Heart right ventricle (tissue), 16 donors: ENCODE measurements at regions of chr1 and their contacts with region 1.

Region 1: DNA sequence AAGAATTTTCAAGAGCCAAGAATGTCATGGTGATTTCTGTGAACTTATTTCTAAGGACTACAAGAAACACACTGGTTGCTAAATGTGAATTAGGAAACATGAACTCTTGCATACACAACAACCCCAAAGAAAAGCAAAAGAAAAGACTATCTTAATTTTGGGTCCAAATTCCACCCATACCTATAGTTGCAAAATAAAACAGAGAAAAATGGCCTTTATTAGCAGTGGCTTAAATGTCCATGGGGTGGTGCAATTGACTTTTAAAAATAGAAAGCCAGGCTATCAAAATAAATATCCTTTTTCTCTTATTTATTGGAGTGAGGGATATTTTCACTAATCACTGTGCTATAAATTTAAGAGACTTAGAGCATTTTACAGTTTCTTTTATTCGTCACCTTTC is 80.9 kb upstream of the DPYD start:
- DNase-seq: no peak
- ATAC-seq: no peak
- H3K4me3 ChIP-seq: no peak overlapping the region
- H3K27ac ChIP-seq: no peak overlapping the region
- H3K4me1 ChIP-seq: no peaks in the 10 kb centered on the region
- H3K27me3 ChIP-seq: no peaks in the 10 kb centered on the region
- CTCF ChIP-seq: peak in 1 of 9 donors; percentile 11

Region 2: DNA sequence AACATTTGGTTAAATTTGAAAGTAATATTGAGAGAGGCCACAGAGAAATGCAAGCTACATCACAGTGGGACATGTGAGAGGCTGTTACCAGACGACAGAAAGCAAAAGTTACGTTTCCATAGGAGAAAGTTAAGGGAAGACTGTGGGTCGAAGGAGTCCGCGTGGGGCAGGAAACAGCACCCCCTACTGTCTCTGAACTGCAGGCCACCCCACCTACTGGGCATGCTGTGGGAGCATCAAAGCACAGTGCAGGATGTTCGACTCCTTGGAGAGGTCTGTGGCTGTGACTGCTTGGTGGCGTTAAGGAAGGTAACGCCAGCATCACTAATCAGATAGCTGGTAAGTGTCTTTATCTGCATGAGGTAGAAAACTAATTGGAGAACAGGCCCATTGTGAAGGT is 1156.3 kb before region 1 on chr1:
- intact Hi-C with region 1: loop called in 1 of 10 experiments (anchors 10 kb)
- DNase-seq: peak in 1 of 2 donors; percentile 24
- ATAC-seq: peak in 4 of 8 donors; percentile 65 to 72 (median 68)
- H3K4me3 ChIP-seq: no peak overlapping the region
- H3K27ac ChIP-seq: no peak overlapping the region
- H3K4me1 ChIP-seq: peaks cover 0 to 5% (median 0%) of the 10 kb centered on the region in 9 donors
- H3K27me3 ChIP-seq: no peaks in the 10 kb centered on the region
- CTCF ChIP-seq: peak in 8 of 9 donors; percentile 53 to 71 (median 62)

Region 3: GRCh38 chr1:97270508-97271307 is 731.1 kb before region 1 on chr1:
- intact Hi-C with region 1: loop called in 1 of 10 experiments (anchors 5 kb)
- DNase-seq: no peak
- ATAC-seq: no peak
- H3K4me3 ChIP-seq: no peak overlapping the region
- H3K27ac ChIP-seq: no peak overlapping the region
- H3K4me1 ChIP-seq: peaks cover 0 to 12% (median 0%) of the 10 kb centered on the region in 9 donors
- H3K27me3 ChIP-seq: no peaks in the 10 kb centered on the region
- CTCF ChIP-seq: no peak